Endothelial cell of umbilical vein (primary cell): ENCODE measurements at regions of chr2 and their contacts with region 1.

Region 1: DNA sequence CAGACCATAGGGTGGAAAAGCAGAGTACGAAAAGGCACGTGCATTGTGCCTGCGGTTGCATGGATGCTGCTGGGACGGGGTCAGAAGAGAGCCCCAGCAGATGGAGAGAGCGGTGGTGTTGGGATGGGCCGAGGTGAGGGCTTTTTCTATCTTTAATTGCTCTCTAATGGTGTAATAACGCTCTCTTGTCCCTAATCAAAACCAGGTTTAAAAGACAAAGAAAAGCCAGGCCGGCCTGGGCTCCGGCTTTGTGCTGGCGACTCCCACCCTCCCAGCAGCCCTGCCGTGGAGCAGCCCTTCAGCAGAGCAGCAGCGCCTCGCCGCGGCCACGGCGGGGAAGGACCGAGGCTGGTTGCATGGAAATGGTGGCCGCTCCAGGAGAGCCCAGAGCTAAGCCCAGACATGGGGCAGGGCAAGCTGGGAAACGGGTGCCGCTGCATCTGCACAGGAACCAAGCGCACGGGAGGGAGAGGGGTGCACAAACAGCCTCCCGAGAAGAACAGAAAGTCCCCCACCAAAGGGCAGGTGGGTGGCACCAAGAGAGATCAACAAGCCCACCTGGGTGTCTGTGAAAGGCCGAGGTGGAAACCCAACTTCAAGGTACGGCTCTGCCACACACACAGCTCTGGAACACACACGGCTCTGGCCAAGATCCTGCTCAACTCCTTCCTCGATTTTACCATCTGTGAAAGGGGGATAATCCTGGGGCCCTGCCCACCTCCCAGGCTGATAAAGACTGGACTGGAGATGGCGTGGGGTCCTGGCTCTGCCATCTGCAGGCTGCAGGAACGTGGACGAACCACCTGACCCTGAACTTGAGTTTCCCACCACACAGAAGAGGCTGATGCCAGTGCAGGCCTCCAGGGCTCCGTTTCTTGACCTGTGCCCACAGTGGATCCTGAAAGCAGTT is 15.0 kb downstream of the HS1BP3 start:
- DNase-seq: peak; percentile 84
- H3K4me3 ChIP-seq: no peak overlapping the region
- H3K27ac ChIP-seq: peak overlapping the region; percentile 72
- H3K4me1 ChIP-seq: peaks cover 20% of the 10 kb centered on the region
- H3K27me3 ChIP-seq: no peaks in the 10 kb centered on the region
- CTCF ChIP-seq: peak; percentile 96 to 99
- POLR2A ChIP-seq: no peak

Region 2: DNA sequence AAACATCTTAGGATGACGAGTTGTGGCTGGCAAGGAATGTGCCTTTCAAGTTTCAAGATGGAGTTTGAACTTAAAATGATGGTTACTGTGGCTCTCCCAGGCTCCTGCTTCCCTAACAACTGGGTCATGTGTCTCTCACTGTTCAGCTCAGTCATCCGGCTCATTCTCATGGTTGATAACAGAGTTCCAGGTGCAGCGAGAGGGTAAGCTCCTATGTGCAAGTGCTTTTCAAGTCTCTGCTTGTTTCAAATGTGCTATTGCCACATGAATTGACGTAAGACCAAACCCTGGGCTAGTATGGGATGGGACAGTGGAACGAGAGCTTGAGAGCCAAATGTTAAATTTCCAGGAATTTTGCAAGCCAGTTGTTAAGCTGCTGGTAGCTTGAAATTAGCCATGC is 265.7 kb before region 1 on chr2:
- CTCF ChIA-PET with region 1: no interaction called
- POLR2A ChIA-PET with region 1: no interaction called
- dilution Hi-C with region 1: no loop called
- intact Hi-C with region 1: no loop called
- DNase-seq: no peak
- H3K4me3 ChIP-seq: no peak overlapping the region
- H3K27ac ChIP-seq: no peak overlapping the region
- H3K4me1 ChIP-seq: no peaks in the 10 kb centered on the region
- H3K27me3 ChIP-seq: peaks cover 32 to 33% of the 10 kb centered on the region in 2 experiments
- CTCF ChIP-seq: no peak
- POLR2A ChIP-seq: no peak

Region 3: GRCh38 chr2:20398956-20399567 is 236.9 kb before region 1 on chr2:
- CTCF ChIA-PET with region 1: interaction called, 225 read pairs
- POLR2A ChIA-PET with region 1: no interaction called
- dilution Hi-C with region 1: no loop called
- intact Hi-C with region 1: loop called (anchors 1 kb)
- DNase-seq: no peak
- H3K4me3 ChIP-seq: no peak overlapping the region
- H3K27ac ChIP-seq: no peak overlapping the region
- H3K4me1 ChIP-seq: no peaks in the 10 kb centered on the region
- H3K27me3 ChIP-seq: peaks cover 21% of the 10 kb centered on the region in 2 experiments
- CTCF ChIP-seq: no peak
- POLR2A ChIP-seq: no peak

Region 4: GRCh38 chr2:20438334-20439192 is 197.4 kb before region 1 on chr2:
- CTCF ChIA-PET with region 1: interaction called, 84 read pairs
- POLR2A ChIA-PET with region 1: interaction called, 34 read pairs
- dilution Hi-C with region 1: loop called (anchors 10 kb)
- intact Hi-C with region 1: loop called (anchors 1 kb)
- DNase-seq: peak; percentile 66
- H3K4me3 ChIP-seq: peak overlapping the region in 1 of 3 experiments; percentile 30
- H3K27ac ChIP-seq: peak overlapping the region; percentile 54
- H3K4me1 ChIP-seq: peaks cover 17% of the 10 kb centered on the region
- H3K27me3 ChIP-seq: no peaks in the 10 kb centered on the region
- CTCF ChIP-seq: no peak
- POLR2A ChIP-seq: no peak

Region 5: DNA sequence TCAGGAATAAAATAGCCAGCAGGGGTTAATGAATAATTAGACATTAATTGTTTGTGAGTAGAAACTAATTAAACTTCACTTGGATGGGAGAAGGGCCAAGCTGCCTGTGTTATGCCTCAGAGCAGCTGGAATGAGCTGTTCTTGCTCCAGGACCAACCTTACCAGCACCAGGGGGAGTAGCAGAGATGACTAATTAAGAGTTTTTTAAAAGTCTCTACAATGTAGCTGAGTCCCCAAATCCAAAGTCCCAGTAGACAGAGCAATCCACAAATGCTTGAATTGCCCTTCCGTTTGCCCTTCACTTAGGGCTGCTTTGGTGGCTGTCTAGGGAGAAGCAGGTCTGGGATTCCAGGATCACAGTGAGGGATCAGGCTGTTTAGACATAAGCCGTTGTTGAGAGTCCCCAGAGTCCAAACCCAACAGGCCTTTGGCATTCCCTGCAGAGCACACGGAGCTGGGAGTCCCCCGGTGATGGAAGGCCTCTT is 129.7 kb before region 1 on chr2:
- CTCF ChIA-PET with region 1: interaction called, 12 read pairs
- POLR2A ChIA-PET with region 1: no interaction called
- dilution Hi-C with region 1: no loop called
- intact Hi-C with region 1: no loop called
- DNase-seq: peak; percentile 45
- H3K4me3 ChIP-seq: no peak overlapping the region
- H3K27ac ChIP-seq: no peak overlapping the region
- H3K4me1 ChIP-seq: no peaks in the 10 kb centered on the region
- H3K27me3 ChIP-seq: no peaks in the 10 kb centered on the region
- CTCF ChIP-seq: peak in 1 of 2 donors; percentile 9
- POLR2A ChIP-seq: no peak

Region 6: DNA sequence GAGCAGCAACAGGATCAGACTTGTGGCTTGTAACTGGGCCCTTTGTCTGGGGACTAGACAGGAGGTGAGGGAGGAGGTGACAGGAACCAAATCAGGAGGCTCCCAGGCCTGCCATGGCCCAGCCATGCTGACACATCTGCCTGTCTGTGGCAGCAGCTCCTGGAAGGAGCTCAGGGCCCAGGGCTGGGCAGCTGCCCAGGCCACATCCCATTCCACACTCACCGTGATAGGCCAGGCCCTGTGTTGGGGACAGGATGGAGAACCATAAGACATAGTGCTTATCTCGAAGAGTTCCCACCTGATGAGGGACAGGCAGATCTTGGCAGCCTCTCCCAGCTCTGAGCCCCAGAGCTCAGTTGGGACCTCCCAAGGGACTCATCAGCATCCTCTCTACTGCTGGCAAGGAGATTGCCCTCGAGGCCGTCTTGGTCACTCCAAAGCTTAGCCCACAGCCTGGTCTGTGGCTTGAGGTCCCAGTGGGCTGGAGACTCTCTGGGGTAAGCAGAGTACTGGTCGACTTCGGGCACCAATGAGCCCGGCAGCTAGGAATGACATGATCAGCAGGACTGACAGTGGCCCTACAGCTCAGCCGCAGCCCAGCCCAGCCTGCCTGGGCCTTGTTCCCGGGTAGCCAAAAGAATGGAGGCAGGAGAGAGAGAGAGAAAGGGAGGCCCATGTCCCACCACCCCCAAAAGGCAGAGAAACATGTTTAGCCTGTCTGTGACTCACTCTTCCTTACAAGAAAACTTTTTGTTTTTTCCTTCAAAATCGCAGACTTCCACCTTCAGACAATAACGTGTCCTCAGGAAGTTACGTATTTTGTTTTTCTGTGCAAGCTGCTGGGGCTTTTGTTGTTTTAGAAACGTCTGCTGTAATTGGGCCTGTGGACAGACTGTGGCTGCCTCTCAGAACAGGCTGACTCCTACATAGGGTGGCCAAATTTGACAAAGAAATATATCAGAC is 67.1 kb before region 1 on chr2:
- CTCF ChIA-PET with region 1: interaction called, 6 read pairs
- POLR2A ChIA-PET with region 1: interaction called, 4 read pairs
- dilution Hi-C with region 1: no loop called
- intact Hi-C with region 1: loop called (anchors 1 kb)
- DNase-seq: peak; percentile 98
- H3K4me3 ChIP-seq: no peak overlapping the region
- H3K27ac ChIP-seq: peak overlapping the region; percentile 100
- H3K4me1 ChIP-seq: peaks cover 72% of the 10 kb centered on the region
- H3K27me3 ChIP-seq: no peaks in the 10 kb centered on the region
- CTCF ChIP-seq: no peak
- POLR2A ChIP-seq: peak; percentile 72

Region 7: DNA sequence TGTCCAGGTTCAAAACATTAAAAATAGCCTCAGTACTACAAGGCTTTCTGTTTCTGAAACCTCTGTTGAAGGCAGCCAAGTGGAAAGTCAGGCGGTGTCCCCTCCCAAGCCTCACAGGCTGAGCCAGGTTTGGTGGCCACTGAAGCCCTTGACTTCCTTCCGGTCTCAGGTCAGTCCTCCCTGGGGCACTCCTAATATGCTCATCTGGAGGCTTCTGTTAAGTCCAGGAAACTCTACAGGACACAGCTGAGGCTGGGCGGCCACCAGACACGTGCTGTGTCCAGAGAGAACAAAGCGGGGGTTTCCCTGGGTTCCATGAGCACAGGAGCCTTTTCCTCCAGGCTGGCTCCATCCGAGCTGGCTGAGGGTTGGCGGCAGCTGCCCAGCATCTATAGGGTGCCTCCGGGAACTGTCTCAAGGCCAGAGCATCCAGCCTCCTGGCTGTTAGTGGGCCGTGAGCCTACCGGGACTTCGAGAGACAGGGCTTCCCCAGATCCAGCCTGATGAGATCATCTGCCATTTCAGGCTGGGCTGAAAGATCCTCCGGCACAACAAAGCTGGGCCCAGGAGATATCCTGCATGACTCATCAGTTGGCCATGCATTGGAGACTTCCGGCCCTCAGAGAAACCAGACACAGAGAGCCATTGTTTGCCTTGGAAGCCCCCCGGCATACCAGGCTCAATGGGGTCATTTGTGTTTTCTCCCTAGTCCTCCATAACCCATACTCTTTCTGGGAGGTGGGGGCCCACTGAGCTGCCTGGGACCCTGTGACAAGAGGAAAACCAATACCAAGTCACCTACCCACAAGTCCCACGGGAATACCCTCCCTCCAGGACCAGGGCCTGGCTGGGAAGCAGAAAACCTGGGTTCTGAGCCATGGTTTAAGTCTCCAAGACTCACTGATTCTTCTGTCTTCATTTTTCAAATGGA is 56.8 kb before region 1 on chr2:
- CTCF ChIA-PET with region 1: interaction called, 14 read pairs
- POLR2A ChIA-PET with region 1: interaction called, 4 read pairs
- dilution Hi-C with region 1: no loop called
- intact Hi-C with region 1: loop called (anchors 1 kb)
- DNase-seq: peak; percentile 100
- H3K4me3 ChIP-seq: no peak overlapping the region
- H3K27ac ChIP-seq: peak overlapping the region; percentile 100
- H3K4me1 ChIP-seq: peaks cover 84% of the 10 kb centered on the region
- H3K27me3 ChIP-seq: no peaks in the 10 kb centered on the region
- CTCF ChIP-seq: no peak
- POLR2A ChIP-seq: no peak

Region 8: GRCh38 chr2:20617892-20618467 is 17.9 kb before region 1 on chr2:
- CTCF ChIA-PET with region 1: interaction called, 14 read pairs
- POLR2A ChIA-PET with region 1: interaction called, 3 read pairs
- dilution Hi-C with region 1: no loop called
- intact Hi-C with region 1: loop called (anchors 1 kb)
- DNase-seq: peak; percentile 98
- H3K4me3 ChIP-seq: no peak overlapping the region
- H3K27ac ChIP-seq: peak overlapping the region; percentile 77
- H3K4me1 ChIP-seq: peaks cover 34% of the 10 kb centered on the region
- H3K27me3 ChIP-seq: no peaks in the 10 kb centered on the region
- CTCF ChIP-seq: peak; percentile 34 to 67
- POLR2A ChIP-seq: no peak

Region 9: DNA sequence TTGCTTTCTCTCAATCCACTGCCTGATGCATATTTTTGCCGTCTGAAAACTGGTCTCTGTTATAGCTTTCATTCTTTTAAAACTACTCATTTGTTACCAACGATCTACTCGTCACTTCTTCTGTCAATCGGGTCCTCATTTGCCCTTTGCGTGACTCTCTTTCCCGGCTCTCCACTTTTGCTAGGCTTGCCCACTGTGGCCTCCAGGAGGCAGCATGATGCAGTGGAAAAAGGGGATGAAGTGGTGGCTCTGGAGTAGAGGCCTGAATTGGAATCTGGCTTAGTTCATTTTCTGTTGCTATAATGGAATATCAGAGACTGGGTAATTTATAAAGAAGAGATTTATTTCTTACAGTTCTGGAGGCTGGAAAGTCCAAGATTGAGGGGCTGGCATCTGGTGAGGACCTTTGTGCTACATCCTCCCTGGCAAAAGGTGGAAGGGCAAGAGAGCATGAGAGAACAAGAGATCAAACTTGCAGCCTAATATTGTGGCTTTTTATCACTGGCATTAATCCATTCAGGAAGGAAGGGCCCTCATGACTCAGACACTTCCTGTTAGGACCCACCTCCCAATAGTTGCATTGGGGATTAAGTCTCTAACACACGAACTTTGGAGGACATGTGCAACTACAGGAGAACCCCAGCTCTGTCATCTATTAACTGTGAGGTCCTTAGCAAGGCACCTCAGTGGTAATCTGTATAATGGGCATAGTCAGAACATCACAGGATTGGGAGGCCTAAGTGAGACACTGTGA is 46.4 kb after region 1 on chr2:
- CTCF ChIA-PET with region 1: no interaction called
- POLR2A ChIA-PET with region 1: no interaction called
- dilution Hi-C with region 1: no loop called
- intact Hi-C with region 1: no loop called
- DNase-seq: peak; percentile 46
- H3K4me3 ChIP-seq: no peak overlapping the region
- H3K27ac ChIP-seq: no peak overlapping the region
- H3K4me1 ChIP-seq: peaks cover 5% of the 10 kb centered on the region
- H3K27me3 ChIP-seq: no peaks in the 10 kb centered on the region
- CTCF ChIP-seq: peak; percentile 58 to 75
- POLR2A ChIP-seq: no peak